Head of caudate nucleus (tissue), 42 donors: ENCODE measurements at regions of chr7 and their contacts with region 1.

Region 1: DNA sequence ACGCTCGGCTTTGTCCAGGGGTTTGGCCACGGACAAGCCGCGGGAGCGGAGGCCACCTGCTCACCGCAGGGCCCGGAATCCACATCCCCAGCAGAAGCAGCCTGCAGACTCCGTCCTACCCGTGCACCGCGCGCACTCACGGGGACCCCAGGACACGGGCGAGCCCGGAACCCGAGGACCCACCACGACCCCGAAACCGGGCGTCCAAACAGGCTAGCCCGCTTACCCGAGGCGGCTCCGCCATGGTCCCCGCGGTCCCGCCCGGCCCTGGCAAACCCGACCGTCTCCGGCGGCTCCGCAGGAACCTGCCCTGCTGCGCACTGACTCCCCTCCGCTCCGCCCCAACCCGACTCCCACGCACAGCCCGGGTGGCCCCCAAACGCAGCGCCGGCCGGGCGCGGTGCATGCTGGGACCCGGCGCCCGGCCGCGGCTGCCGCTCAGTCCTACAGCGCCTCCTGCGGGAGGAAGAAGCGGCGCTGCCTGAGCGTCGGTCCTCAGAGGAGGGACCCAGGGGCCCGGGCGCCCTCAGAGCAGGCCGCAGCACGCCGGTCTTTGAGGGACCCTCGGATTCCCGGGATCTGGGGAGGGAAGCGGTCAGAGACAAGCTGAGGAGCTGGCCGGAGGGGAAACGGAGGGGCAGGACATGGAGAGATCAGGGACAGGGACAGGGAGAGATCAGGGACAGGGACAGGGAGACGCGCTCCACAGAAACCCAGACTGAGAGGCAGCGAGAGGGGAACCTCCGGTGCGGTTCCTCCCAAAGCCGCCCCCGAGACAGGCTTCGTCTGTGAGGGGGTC is at the start of gene ZNF786:
- DNase-seq: peak; percentile 49 to 95 (median 88)

Region 2: DNA sequence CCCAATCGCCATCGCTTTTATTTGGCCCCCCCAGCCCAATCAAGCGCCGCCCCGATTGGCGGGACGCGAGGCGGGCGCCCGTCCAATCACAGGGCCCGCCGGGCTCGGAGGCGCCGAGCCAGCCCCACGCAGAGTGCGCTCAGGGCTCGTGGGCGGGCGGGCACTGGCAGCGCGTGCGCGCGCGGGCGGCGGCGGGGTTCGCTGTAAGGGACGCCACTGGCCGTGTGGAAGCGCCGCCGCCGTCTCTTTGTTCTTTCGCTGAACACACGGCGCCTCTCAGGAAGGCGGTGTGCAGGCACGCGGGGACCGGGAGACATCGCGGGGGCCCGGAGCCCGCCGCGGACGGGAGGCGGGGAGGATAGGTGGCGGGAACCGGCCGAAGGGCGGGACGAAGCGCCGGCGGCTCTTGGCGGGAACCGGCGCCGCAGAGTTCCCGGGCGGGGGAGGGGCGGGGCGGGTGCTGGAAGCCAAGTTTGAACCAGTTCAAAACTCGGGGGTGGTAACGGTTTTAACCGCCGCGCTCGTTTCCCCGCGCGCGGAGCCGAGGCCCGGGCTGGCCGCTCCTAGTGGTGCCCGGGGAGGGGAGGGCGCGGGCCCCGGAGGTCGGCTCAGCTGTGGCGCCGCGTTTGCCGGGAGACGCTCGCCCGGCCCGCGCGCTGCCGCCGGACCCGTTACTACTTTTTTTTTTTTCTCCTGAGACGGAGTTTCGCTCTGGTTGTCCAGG is 206.1 kb before region 1 on chr7:
- intact Hi-C with region 1: loop called (anchors 5 kb)
- DNase-seq: peak; percentile 77 to 97 (median 93)

Region 3: DNA sequence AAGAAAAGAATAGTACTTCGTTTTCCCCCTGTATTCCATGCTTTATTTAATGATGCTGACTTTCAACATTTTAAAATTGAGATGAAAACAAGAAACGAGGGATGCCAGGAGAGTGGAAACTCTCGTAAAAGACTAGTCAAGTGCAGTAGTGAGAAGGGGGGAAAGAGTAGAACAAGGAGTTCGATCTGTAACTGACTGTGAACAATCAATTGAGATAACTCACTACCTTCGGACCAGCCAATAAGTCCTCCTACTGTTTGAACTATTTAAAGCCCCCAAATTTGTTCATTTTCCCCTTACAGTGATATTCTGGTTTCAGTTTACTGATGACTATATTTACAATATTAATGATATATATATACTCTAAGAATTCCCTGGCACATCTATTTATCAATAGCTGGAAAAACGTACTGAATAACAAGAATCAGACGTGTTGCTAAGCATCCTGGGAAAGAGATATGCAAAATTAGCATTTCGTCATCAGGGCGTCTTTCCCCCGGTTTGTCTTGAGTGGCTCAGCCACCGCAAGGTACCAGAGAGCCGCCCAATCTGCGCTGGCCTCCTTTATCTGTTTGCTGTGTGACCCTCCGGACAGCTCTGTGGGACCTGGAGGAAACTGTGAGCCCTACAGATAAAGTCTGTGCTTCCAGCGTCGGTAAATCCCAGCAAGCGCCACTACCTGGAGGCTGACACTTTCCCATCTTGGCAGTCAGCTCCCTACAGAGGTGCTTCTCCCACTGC is 103.4 kb before region 1 on chr7:
- intact Hi-C with region 1: loop called (anchors 5 kb)
- DNase-seq: peak; percentile 60 to 92 (median 80)

Region 4: DNA sequence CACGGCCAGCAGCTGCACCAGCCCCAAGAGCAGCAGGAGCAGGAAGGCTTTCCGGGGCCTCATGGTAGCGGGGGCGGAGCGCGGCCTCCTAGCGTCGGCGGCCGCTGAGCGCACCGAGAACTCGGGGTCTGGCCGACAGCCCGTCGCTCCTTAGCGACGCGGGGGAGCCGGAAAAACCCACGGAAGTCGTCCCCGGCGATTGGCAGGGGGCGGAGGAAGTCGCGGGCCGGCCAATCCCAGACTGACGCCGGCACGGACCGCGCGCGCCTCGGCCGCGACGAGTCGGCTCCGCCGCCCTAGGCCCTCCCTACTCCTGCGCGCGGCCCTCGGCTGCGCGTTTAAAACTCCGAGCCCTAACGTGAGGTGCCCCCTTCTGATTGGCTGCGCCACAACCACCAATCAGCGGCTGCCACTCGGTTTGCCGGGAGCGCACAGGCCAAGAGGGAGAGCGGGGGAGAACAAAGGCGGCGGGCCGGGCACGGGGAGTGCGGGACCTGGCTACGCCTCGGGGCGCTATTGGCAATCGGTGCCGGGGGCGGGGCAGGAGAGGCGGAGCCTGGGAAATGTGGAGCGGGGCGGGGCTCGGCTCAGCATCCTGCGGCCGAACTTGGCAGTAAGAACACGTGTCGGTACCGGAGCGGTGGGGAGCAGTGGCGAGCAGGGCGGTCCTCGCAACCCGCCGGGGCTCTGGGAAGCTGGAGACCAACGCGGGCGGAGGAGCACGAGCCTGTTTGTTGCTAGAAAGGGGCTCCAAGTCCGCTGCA is 62.1 kb before region 1 on chr7 and contains the start of gene PDIA4:
- intact Hi-C with region 1: loop called (anchors 2 kb)
- DNase-seq: peak; percentile 99 to 100 (median 100)

Region 5: DNA sequence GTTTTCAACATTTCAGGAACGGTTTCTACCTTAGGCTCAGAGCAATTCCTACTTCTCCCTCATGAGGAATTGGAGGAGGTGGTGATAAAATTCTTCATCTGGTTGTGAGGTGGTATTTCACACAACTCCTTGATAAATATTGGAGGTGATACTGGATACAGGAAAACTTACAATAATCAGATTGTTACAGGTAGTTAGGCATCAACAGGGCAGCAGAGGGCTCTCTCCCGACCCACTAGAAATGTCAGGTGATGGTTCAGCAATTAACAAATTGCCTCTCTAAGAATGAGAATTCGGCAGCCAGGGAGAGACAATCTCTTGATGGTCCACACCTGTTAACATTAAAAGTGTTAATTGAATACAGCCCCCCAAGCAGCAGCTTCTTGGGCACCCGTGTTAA is 22.7 kb before region 1 on chr7:
- intact Hi-C with region 1: no loop called
- DNase-seq: no peak

Region 6: DNA sequence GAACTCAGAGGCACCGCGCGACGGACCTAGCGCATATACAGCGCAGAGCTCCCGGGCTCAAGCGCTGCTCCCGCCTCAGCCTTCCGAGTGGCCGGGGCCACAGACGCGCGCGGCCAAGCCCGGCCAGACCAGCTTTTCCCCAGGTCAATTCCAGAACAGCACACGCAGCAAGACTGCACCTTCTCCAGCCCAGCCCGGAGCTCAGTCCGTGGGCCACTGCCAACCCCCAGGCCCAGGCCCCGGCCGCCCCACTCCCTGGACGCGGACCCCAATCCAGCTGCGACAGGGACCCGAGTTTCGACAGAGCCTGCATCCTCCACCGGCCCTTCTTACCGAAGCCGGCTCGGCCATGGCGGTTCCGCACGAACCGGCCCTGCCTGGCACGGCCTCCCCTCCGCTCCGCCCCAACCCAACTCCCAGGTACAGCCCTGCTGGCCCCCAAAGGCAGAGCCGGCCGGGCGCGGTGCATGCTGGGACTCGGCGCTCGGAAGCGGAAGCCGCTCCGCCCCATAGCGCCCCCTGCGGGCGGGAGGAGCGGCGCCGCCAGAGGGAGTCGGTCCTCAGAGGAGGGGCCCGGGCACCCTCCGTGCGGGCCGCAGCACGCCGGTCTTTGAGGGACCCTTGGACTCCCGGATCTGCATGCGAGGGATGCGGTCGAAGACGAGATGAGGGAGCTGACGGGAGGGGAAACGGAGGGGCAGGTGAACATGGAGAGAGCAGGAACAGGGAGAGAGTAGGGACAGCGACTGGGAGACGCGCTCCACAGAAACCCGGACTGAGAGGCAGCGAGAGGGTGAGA is 35.5 kb after region 1 on chr7 and contains the start of gene ZNF425:
- intact Hi-C with region 1: loop called (anchors 2 kb)
- DNase-seq: peak; percentile 50 to 96 (median 90)

Region 7: DNA sequence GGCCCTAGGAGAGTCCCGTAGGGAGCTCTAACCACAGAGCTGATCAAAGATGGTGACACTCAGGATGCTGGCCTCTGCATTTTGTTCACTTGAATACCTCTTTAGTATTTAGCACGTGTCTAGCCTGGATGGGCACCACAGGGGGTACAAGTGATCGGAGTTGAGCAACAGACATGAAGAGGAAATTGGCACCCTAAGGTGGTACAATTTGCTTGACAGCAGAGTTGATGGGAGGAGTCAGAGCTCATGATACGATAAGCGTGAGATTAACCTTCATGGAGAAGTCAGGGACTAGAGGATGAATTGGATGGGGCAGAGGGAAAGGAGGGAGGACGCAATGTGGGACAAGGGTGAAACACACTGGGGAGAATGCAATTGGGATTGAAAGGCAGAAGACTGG is 138.9 kb after region 1 on chr7:
- intact Hi-C with region 1: no loop called
- DNase-seq: no peak